Keratinocyte (primary cell): ENCODE measurements at regions of chr4 and their contacts with region 1.

Region 1: GRCh38 chr4:76179398-76180318 is 31.5 kb upstream of the NUP54 start:
- DNase-seq: peak; percentile 36
- H3K4me3 ChIP-seq: no peak overlapping the region
- H3K27ac ChIP-seq: no peak overlapping the region
- H3K4me1 ChIP-seq: peaks cover 3% of the 10 kb centered on the region
- H3K27me3 ChIP-seq: no peaks in the 10 kb centered on the region
- CTCF ChIP-seq: peak; percentile 85 to 89 (median 87)

Region 2: GRCh38 chr4:75800972-75801371 is 378.7 kb before region 1 on chr4:
- dilution Hi-C with region 1: no loop called
- DNase-seq: no peak
- H3K4me3 ChIP-seq: no peak overlapping the region
- H3K27ac ChIP-seq: no peak overlapping the region
- H3K4me1 ChIP-seq: peaks cover 4% of the 10 kb centered on the region
- H3K27me3 ChIP-seq: no peaks in the 10 kb centered on the region
- CTCF ChIP-seq: no peak

Region 3: DNA sequence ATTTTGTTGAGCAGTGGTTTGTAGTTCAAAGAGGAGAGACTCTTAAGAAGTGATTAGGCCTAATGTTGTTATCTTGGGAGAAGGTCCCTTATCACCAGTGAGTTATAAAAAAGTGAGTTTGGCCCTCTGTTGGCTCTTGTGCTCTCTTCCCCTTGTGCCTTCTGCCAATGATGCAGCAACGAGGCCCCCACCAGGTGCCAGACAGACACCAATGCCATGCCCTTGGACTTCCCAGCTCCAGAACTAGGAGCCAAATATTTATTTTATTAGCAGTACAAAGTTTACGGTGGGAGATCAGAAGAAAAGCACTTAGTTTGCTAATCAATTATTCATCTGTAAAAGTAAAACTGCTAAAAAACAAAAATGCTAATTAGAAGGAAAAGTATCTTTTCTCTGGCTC is 216.1 kb before region 1 on chr4:
- dilution Hi-C with region 1: no loop called
- DNase-seq: no peak
- H3K4me3 ChIP-seq: no peak overlapping the region
- H3K27ac ChIP-seq: no peak overlapping the region
- H3K4me1 ChIP-seq: no peaks in the 10 kb centered on the region
- H3K27me3 ChIP-seq: no peaks in the 10 kb centered on the region
- CTCF ChIP-seq: no peak

Region 4: GRCh38 chr4:76504613-76505465 is 325.2 kb after region 1 on chr4:
- dilution Hi-C with region 1: loop called (anchors 25 kb)
- DNase-seq: no peak
- H3K4me3 ChIP-seq: no peak overlapping the region
- H3K27ac ChIP-seq: no peak overlapping the region
- H3K4me1 ChIP-seq: no peaks in the 10 kb centered on the region
- H3K27me3 ChIP-seq: peaks cover 6% of the 10 kb centered on the region
- CTCF ChIP-seq: peak in 2 of 3 experiments; percentile 33 to 45

Region 5: GRCh38 chr4:76585897-76586360 is 406.3 kb after region 1 on chr4:
- dilution Hi-C with region 1: no loop called
- DNase-seq: no peak
- H3K4me3 ChIP-seq: peak overlapping the region; percentile 21 to 68 (median 52)
- H3K27ac ChIP-seq: no peak overlapping the region
- H3K4me1 ChIP-seq: no peaks in the 10 kb centered on the region
- H3K27me3 ChIP-seq: peaks cover 18% of the 10 kb centered on the region
- CTCF ChIP-seq: peak in 2 of 3 experiments; percentile 18 to 33